Transverse colon (tissue), 4 donors: ENCODE measurements at regions of chrX and their contacts with region 1.

Region 1: DNA sequence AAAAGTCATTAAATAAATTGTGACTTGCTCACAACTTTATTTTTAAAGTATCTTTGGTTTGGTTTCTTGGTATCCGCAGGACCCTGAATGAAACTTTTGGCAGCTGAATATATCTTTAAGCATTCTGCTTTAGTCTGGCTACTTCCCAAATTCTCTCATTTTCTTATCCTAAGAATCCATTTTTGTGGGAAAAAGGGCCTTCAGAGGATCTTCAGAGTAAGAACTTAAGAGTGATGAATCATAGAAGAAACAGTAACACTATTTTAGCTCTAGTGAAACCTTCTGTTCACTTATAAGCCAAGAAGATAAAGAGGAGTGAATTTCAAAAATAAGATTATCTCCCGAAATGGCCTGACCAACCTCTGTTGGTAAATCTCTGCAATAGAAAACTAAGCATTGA is 540.6 kb upstream of the MAGEB18 start:
- DNase-seq: no peak
- H3K4me3 ChIP-seq: no peak overlapping the region
- H3K27ac ChIP-seq: no peak overlapping the region
- H3K4me1 ChIP-seq: no peaks in the 10 kb centered on the region
- H3K27me3 ChIP-seq: no peaks in the 10 kb centered on the region
- CTCF ChIP-seq: no peak
- EP300 ChIP-seq: no peak
- POLR2A ChIP-seq: no peak

Region 2: GRCh38 chrX:25674776-25675175 is 77.2 kb after region 1 on chrX:
- in situ Hi-C with region 1: loop called in 1 of 4 experiments (anchors 25 kb)
- intact Hi-C with region 1: no loop called
- DNase-seq: no peak
- H3K4me3 ChIP-seq: no peak overlapping the region
- H3K27ac ChIP-seq: no peak overlapping the region
- H3K4me1 ChIP-seq: no peaks in the 10 kb centered on the region
- H3K27me3 ChIP-seq: no peaks in the 10 kb centered on the region
- CTCF ChIP-seq: no peak
- EP300 ChIP-seq: no peak
- POLR2A ChIP-seq: no peak